CD8-positive, alpha-beta T cell (primary cell): ENCODE measurements at regions of chr15 and their contacts with region 1.

Region 1: GRCh38 chr15:89893696-89894455 is at the start of gene AP3S2:
- DNase-seq: peak; percentile 78 to 93 (median 88)
- ATAC-seq: peak; percentile 92
- H3K4me3 ChIP-seq: peak within 1 kb of the TSS; percentile 80 to 91
- H3K4me3 Mint-ChIP-seq: peak within 1 kb of the TSS; percentile 93
- H3K27ac ChIP-seq: peak within 1 kb of the TSS; percentile 73 to 75
- H3K27ac Mint-ChIP-seq: peak within 1 kb of the TSS; percentile 95
- H3K4me1 ChIP-seq: peaks cover 18% of the 10 kb centered on the region
- H3K4me1 Mint-ChIP-seq: peaks cover 30% of the 10 kb centered on the region
- H3K27me3 ChIP-seq: no peaks in the 10 kb centered on the region
- H3K27me3 Mint-ChIP-seq: no peaks in the 10 kb centered on the region
- CTCF ChIP-seq: no peak
- total RNA-seq, gene AP3S2: 14.2 to 16.0 TPM

Region 2: DNA sequence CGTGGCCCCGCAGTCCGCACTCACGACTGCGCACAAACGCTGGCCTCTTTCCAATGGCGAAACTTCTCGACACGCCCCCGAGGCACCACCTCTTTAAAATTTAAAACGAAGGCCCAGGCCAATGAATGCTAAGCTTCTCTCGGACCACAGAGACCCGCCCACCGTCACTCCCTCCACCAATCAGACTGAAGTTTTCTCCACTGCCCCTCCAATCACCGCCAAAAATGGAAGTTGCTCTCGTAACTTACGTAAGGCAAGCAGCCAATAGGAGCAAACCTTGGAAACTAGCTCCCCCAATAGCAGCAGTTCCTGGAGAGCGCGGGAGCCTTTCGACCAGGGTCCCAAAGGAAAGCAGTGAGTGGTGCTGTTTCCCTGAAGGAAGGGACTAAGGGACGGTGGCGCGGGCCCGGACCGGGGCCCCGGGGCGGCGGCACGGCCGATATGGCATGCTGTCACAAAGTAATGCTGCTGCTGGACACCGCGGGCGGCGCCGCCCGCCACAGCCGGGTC is 318.7 kb before region 1 on chr15 and contains the start of gene TICRR:
- CTCF ChIA-PET with region 1: no interaction called
- POLR2A ChIA-PET with region 1: no interaction called
- intact Hi-C with region 1: loop called in 1 of 2 experiments (anchors 2 kb)
- DNase-seq: peak; percentile 88 to 99 (median 92)
- ATAC-seq: peak; percentile 98
- H3K4me3 ChIP-seq: peak within 1 kb of the TSS; percentile 58 to 86
- H3K4me3 Mint-ChIP-seq: peak within 1 kb of the TSS; percentile 82
- H3K27ac ChIP-seq: no peak within 1 kb of the TSS
- H3K27ac Mint-ChIP-seq: peak within 1 kb of the TSS; percentile 13
- H3K4me1 ChIP-seq: peaks cover 6% of the 10 kb centered on the region
- H3K4me1 Mint-ChIP-seq: peaks cover 11% of the 10 kb centered on the region
- H3K27me3 ChIP-seq: no peaks in the 10 kb centered on the region
- H3K27me3 Mint-ChIP-seq: peaks cover 11% of the 10 kb centered on the region
- CTCF ChIP-seq: no peak
- total RNA-seq, gene TICRR: 0.11 TPM in 1 of 2 experiments, not detected in the other

Region 3: DNA sequence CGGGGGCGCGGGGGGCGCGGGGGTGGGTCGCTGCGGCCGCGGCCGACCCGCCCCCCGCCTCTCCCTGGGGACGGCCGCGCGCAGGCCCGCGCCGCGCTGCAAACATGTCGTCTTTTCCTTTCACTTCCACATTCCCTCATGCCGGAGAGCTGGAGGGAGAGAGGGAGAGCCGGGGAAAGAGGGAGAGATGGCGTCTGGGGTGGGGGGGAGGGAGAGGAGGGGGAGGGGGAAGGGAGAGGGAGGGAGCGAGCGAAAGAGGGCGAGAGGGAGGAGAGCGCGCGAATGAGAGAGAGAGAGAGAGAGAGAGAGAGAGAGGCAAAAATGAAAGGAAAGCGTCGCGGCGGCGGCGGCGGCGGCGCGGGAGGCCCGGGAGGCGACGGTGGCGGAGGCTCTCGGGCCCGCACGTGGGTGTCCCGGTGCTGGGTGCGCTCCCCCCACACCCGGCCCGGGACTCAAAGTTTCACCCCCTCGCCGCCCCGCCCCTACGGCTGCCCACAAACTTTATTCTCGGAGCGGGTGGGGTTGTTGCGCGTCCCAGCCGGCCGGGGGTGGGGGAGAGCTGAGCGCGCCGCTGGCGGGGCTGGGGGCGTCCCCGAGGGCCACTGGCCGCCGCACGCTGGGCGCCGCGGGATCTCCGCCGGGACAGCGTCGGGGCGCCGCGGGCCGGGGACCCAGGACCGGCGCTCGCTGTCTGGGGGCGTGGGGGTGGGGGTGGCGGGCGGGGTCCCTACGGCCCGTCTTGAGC is 108.0 kb after region 1 on chr15:
- CTCF ChIA-PET with region 1: interaction called, 4 read pairs
- POLR2A ChIA-PET with region 1: interaction called, 3 read pairs
- intact Hi-C with region 1: loop called (anchors 2 kb)
- DNase-seq: peak; percentile 22 to 82 (median 58)
- ATAC-seq: peak; percentile 65
- H3K4me3 ChIP-seq: peak overlapping the region; percentile 48 to 61
- H3K4me3 Mint-ChIP-seq: peak overlapping the region; percentile 88
- H3K27ac ChIP-seq: peak overlapping the region in 1 of 2 experiments; percentile 53
- H3K27ac Mint-ChIP-seq: peak overlapping the region; percentile 79
- H3K4me1 ChIP-seq: peaks cover 27% of the 10 kb centered on the region
- H3K4me1 Mint-ChIP-seq: peaks cover 51% of the 10 kb centered on the region
- H3K27me3 ChIP-seq: no peaks in the 10 kb centered on the region
- H3K27me3 Mint-ChIP-seq: no peaks in the 10 kb centered on the region
- CTCF ChIP-seq: no peak

Region 4: DNA sequence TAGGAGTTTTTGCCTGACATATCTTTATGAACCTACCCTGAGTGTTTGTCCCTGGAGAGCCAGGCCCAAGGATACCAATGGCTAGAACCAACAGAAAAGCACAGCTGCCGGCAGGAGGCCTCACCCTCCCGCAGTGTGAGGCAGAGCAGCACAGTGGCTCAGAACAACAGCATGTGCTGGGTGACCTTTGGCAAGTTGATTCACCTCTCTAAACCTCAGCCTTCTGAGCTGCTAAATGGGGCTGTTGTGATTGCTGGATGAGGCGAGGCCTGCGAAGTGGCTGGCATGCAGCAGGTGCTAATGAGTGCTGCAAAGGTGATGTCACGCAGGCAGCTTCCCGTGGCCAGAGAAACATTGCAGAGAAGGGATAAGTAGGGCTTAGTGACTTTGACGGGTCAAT is 185.1 kb after region 1 on chr15:
- CTCF ChIA-PET with region 1: interaction called, 20 read pairs
- POLR2A ChIA-PET with region 1: no interaction called
- intact Hi-C with region 1: no loop called
- DNase-seq: no peak
- ATAC-seq: no peak
- H3K4me3 ChIP-seq: no peak overlapping the region
- H3K4me3 Mint-ChIP-seq: no peak overlapping the region
- H3K27ac ChIP-seq: no peak overlapping the region
- H3K27ac Mint-ChIP-seq: no peak overlapping the region
- H3K4me1 ChIP-seq: no peaks in the 10 kb centered on the region
- H3K4me1 Mint-ChIP-seq: no peaks in the 10 kb centered on the region
- H3K27me3 ChIP-seq: no peaks in the 10 kb centered on the region
- H3K27me3 Mint-ChIP-seq: no peaks in the 10 kb centered on the region
- CTCF ChIP-seq: no peak

Region 5: GRCh38 chr15:90101969-90102890 is 208.4 kb after region 1 on chr15 and contains the start of gene IDH2:
- CTCF ChIA-PET with region 1: no interaction called
- POLR2A ChIA-PET with region 1: interaction called, 10 read pairs
- intact Hi-C with region 1: loop called in 1 of 2 experiments (anchors 1 kb)
- DNase-seq: peak; percentile 26 to 89 (median 68)
- ATAC-seq: peak; percentile 68
- H3K4me3 ChIP-seq: peak within 1 kb of the TSS; percentile 69 to 81
- H3K4me3 Mint-ChIP-seq: peak within 1 kb of the TSS; percentile 91
- H3K27ac ChIP-seq: peak within 1 kb of the TSS; percentile 81 to 87
- H3K27ac Mint-ChIP-seq: peak within 1 kb of the TSS; percentile 100
- H3K4me1 ChIP-seq: peaks cover 41% of the 10 kb centered on the region
- H3K4me1 Mint-ChIP-seq: peaks cover 53% of the 10 kb centered on the region
- H3K27me3 ChIP-seq: no peaks in the 10 kb centered on the region
- H3K27me3 Mint-ChIP-seq: peaks cover 3% of the 10 kb centered on the region
- CTCF ChIP-seq: no peak
- total RNA-seq, gene IDH2: 41.5 to 42.2 TPM

Region 6: GRCh38 chr15:90994417-90995311 is 1100.8 kb after region 1 on chr15 and contains the start of gene PRC1:
- CTCF ChIA-PET with region 1: no interaction called
- POLR2A ChIA-PET with region 1: no interaction called
- intact Hi-C with region 1: loop called in 1 of 2 experiments (anchors 10 kb)
- DNase-seq: peak; percentile 92 to 99 (median 97)
- ATAC-seq: peak; percentile 96
- H3K4me3 ChIP-seq: peak within 1 kb of the TSS; percentile 78 to 95
- H3K4me3 Mint-ChIP-seq: peak within 1 kb of the TSS; percentile 99
- H3K27ac ChIP-seq: peak within 1 kb of the TSS; percentile 81 to 94
- H3K27ac Mint-ChIP-seq: peak within 1 kb of the TSS; percentile 97
- H3K4me1 ChIP-seq: peaks cover 13% of the 10 kb centered on the region
- H3K4me1 Mint-ChIP-seq: peaks cover 19% of the 10 kb centered on the region
- H3K27me3 ChIP-seq: no peaks in the 10 kb centered on the region
- H3K27me3 Mint-ChIP-seq: no peaks in the 10 kb centered on the region
- CTCF ChIP-seq: no peak
- total RNA-seq, gene PRC1: 24.6 to 31.3 TPM